AG04450 (cell line): ENCODE measurements at regions of chr2 and their contacts with region 1.

Region 1: GRCh38 chr2:195656859-195657633 is at the start of gene SLC39A10:
- DNase-seq: peak; percentile 96
- H3K4me3 ChIP-seq: peak within 1 kb of the TSS; percentile 83
- H3K27ac ChIP-seq: peak within 1 kb of the TSS; percentile 98
- H3K27me3 ChIP-seq: no peaks in the 10 kb centered on the region
- CTCF ChIP-seq: no peak
- polyA plus RNA-seq, gene SLC39A10: 26.1 and 38.5 TPM in 2 replicates

Region 2: DNA sequence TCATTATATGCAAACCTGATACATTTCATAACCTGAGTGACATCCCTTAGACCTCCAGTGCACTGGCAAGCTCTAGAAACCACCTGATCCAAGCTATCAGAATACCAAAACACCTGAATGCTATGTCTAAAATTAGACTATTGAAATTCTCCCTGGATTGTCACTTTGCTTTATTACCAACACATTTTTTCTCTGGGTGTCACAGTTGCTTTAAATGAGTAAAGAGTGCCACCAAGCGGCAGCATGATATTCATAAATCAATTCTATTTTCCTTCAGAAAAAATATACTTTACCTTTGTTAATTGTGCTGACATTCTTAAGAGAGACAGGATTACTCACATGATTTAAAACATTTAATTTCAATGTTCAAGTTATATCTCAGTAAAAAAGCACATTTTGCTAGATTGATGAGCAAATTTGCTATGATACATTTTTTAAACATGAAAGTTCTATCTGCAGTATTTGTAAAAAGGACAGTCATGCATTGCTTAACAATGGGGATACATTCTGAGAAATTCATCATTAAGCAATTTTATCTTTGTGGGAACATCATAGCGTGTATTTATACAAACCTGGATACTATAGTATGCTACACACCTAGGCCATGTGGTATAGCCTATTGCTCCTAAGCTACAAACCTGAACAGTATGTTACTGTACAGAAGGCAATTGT is 338.5 kb before region 1 on chr2:
- CTCF ChIA-PET with region 1: interaction called, 50 read pairs
- POLR2A ChIA-PET with region 1: interaction called, 12 read pairs
- DNase-seq: no peak
- H3K4me3 ChIP-seq: no peak overlapping the region
- H3K27ac ChIP-seq: no peak overlapping the region
- H3K27me3 ChIP-seq: no peaks in the 10 kb centered on the region
- CTCF ChIP-seq: peak; percentile 45; the same call in 1 of the 2 replicates

Region 3: DNA sequence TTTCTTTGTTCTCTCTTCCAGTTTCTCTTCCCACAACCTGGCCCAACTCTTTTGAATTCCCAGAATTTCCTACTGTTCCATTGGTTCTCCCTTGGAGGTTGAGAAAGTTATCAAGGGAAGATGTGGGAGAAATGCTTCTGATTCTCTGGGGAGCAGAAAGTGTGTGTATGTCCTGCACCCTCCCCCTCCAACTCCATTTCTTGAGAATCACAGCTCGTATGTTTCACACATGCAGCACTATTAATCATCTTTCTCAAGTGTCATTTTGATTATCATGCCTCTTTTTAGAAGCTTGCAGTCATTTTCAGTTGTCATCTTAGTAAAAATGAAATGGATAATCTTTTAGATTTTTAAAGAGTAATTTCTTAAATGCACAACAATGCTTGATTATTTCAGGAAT is 296.8 kb before region 1 on chr2:
- CTCF ChIA-PET with region 1: interaction called, 10 read pairs
- POLR2A ChIA-PET with region 1: interaction called, 8 read pairs
- DNase-seq: no peak
- H3K4me3 ChIP-seq: no peak overlapping the region
- H3K27ac ChIP-seq: no peak overlapping the region
- H3K27me3 ChIP-seq: no peaks in the 10 kb centered on the region
- CTCF ChIP-seq: no peak

Region 4: GRCh38 chr2:195498176-195498575 is 158.9 kb before region 1 on chr2:
- CTCF ChIA-PET with region 1: interaction called, 32 read pairs
- POLR2A ChIA-PET with region 1: interaction called, 9 read pairs
- DNase-seq: no peak
- H3K4me3 ChIP-seq: no peak overlapping the region
- H3K27ac ChIP-seq: no peak overlapping the region
- H3K27me3 ChIP-seq: no peaks in the 10 kb centered on the region
- CTCF ChIP-seq: peak; percentile 43

Region 5: GRCh38 chr2:195559431-195559914 is 97.6 kb before region 1 on chr2:
- CTCF ChIA-PET with region 1: interaction called, 22 read pairs
- POLR2A ChIA-PET with region 1: interaction called, 35 read pairs
- DNase-seq: peak; percentile 99
- H3K4me3 ChIP-seq: no peak overlapping the region
- H3K27ac ChIP-seq: peak overlapping the region; percentile 96
- H3K27me3 ChIP-seq: no peaks in the 10 kb centered on the region
- CTCF ChIP-seq: no peak

Region 6: DNA sequence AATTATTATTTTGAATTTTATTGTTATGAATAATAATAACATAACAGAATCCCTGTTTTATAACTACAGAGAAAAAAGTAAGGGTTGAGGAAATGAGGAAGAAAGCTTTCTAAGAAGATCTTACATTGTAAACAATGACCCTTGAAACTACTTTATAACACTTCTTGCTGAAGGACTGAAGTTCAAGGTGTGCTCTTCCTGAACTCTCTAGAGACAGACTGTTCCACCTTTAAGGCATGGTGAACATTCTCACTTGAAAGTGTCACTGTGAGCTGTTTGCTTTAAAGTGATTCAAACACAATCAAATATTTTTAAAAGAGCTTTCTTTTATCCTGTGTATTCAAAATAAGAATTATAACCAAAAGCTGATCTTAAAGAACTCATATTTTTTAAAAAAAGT is 280.1 kb after region 1 on chr2:
- CTCF ChIA-PET with region 1: interaction called, 219 read pairs
- POLR2A ChIA-PET with region 1: no interaction called
- DNase-seq: no peak
- H3K4me3 ChIP-seq: no peak overlapping the region
- H3K27ac ChIP-seq: no peak overlapping the region
- H3K27me3 ChIP-seq: no peaks in the 10 kb centered on the region
- CTCF ChIP-seq: no peak

Region 7: DNA sequence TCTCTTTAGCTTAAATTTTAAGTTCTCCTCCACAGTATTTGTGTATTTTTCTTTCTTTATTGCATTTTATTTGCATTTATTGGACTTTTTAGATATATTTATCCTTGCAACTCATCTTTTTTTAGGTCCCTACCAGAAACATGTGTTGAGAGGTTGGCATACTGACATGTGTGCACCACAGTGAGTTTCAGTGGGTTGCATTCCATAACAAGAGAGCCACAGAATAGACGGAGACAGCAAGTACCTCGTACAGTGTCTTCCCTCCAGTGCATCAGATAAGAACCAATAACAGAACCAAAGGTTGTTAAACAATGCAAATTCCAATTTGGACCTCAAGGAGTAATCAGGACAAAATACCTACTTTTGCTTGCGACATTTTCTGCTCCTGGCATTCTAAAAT is 299.7 kb after region 1 on chr2:
- CTCF ChIA-PET with region 1: no interaction called
- POLR2A ChIA-PET with region 1: no interaction called
- DNase-seq: no peak
- H3K4me3 ChIP-seq: no peak overlapping the region
- H3K27ac ChIP-seq: no peak overlapping the region
- H3K27me3 ChIP-seq: no peaks in the 10 kb centered on the region
- CTCF ChIP-seq: no peak

Region 8: GRCh38 chr2:195998070-195998469 is 341.0 kb after region 1 on chr2:
- CTCF ChIA-PET with region 1: no interaction called
- POLR2A ChIA-PET with region 1: no interaction called
- DNase-seq: no peak
- H3K4me3 ChIP-seq: no peak overlapping the region
- H3K27ac ChIP-seq: no peak overlapping the region
- H3K27me3 ChIP-seq: peaks cover 2% of the 10 kb centered on the region
- CTCF ChIP-seq: no peak